ENCODE measurements at regions of chr15 and their contacts with region 1.

Region 1: GRCh38 chr15:101170568-101171350 is 81.1 kb downstream of the CHSY1 start:
- DNase-seq: peak in 1 of 2 donors; percentile 53
- ATAC-seq: peak; percentile 40 to 50
- H3K4me3 ChIP-seq: no peak overlapping the region
- H3K27ac ChIP-seq: no peak overlapping the region
- H3K4me1 ChIP-seq: peaks cover 12 to 32% of the 10 kb centered on the region in 2 donors
- H3K27me3 ChIP-seq: no peaks in the 10 kb centered on the region
- CTCF ChIP-seq: no peak
- POLR2A ChIP-seq: no peak

Region 2: GRCh38 chr15:101156509-101157159 is 14.1 kb before region 1 on chr15:
- in situ Hi-C with region 1: no loop called
- intact Hi-C with region 1: no loop called
- DNase-seq: no peak
- ATAC-seq: no peak
- H3K4me3 ChIP-seq: no peak overlapping the region
- H3K27ac ChIP-seq: no peak overlapping the region
- H3K4me1 ChIP-seq: no peaks in the 10 kb centered on the region
- H3K27me3 ChIP-seq: no peaks in the 10 kb centered on the region
- CTCF ChIP-seq: no peak
- POLR2A ChIP-seq: no peak

Region 3: GRCh38 chr15:101242160-101242998 is 71.6 kb after region 1 on chr15:
- in situ Hi-C with region 1: loop called in 1 of 4 experiments (anchors 10 kb)
- intact Hi-C with region 1: no loop called
- DNase-seq: no peak
- ATAC-seq: peak in 1 of 2 donors; percentile 39
- H3K4me3 ChIP-seq: no peak overlapping the region
- H3K27ac ChIP-seq: peak overlapping the region in 1 of 4 donors; percentile 37
- H3K4me1 ChIP-seq: peaks cover 42 to 80% of the 10 kb centered on the region in 2 donors
- H3K27me3 ChIP-seq: no peaks in the 10 kb centered on the region
- CTCF ChIP-seq: no peak
- POLR2A ChIP-seq: no peak

Region 4: GRCh38 chr15:101600035-101600434 is 429.3 kb after region 1 on chr15:
- in situ Hi-C with region 1: no loop called
- intact Hi-C with region 1: no loop called
- DNase-seq: no peak
- ATAC-seq: no peak
- H3K4me3 ChIP-seq: no peak overlapping the region
- H3K27ac ChIP-seq: no peak overlapping the region
- H3K4me1 ChIP-seq: no peaks in the 10 kb centered on the region
- H3K27me3 ChIP-seq: no peaks in the 10 kb centered on the region
- CTCF ChIP-seq: no peak
- POLR2A ChIP-seq: no peak

Measured in gastrocnemius medialis (tissue), 4 donors.